CD4-positive, alpha-beta T cell (primary cell): ENCODE measurements at regions of chr3 and their contacts with region 1.

Region 1: DNA sequence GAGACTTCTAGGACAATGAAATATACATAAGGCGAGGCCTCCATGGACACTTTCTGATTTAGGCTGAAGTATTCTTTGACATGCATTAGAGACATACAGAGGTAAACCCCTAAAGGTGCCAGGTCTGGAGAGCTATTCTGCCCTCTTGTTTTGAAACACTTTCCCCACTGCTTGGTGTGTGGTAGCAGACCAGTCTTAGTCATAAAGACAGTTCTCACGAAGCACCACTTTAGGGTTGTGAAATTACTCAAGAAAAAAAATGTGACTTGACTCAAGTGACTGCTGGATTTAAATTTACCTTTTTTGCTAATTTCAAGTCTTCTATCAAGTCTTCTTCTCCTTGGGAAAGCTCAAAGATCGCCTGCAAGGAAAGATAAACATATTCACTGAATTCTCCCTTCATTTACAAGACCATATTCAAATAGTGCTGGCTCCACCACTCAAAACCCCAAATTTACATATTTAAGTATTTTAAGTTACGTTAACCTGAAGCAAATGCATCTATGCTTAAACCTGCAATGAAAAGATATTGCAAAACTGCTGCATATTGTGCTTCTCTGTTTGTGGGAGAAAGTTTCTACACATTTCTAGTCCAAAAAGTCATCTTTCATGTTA is 48.4 kb downstream of the ARHGEF3 start:
- DNase-seq: peak in 6 of 14 experiments; percentile 11 to 53 (median 24)
- ATAC-seq: no peak
- H3K4me3 ChIP-seq: no peak overlapping the region
- H3K4me3 Mint-ChIP-seq: peak overlapping the region; percentile 56
- H3K27ac ChIP-seq: peak overlapping the region; percentile 18 to 31
- H3K27ac Mint-ChIP-seq: peak overlapping the region; percentile 96
- H3K4me1 ChIP-seq: peaks cover 43% of the 10 kb centered on the region
- H3K4me1 Mint-ChIP-seq: peaks cover 69% of the 10 kb centered on the region
- H3K27me3 ChIP-seq: no peaks in the 10 kb centered on the region
- H3K27me3 Mint-ChIP-seq: no peaks in the 10 kb centered on the region
- CTCF ChIP-seq: no peak

Region 2: DNA sequence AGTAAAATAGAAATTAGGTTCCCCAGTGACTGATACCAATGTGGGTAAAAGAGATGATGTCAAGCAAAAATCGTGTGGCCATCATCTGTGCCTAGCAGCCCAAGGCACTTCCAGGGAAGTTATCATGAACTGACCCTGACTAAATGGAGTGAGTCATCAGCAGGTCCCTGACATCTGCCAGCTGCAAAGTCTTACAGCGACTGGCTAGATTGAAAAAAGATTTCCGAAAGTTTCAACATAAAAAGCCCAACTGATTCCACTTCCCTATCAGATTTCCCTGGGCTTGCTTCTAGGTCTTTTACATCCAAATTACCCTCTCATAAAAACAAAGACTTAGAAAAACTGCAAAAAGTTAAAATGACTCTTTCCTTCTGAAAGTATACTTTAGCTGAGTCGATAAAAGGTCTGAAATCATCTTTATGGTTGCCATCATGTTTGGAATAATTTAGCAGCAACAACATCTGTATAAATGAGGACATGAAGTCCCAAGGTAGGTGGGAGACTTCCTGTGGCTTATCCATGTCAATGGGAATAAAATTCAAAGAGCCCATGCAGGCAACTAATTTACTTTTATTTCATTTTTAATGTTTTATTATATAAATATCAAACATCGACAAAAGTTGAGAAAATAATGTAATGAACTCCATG is 627.8 kb before region 1 on chr3:
- CTCF ChIA-PET with region 1: no interaction called
- POLR2A ChIA-PET with region 1: no interaction called
- intact Hi-C with region 1: no loop called
- DNase-seq: peak in 2 of 14 experiments; percentile 3 to 8
- ATAC-seq: no peak
- H3K4me3 ChIP-seq: no peak overlapping the region
- H3K4me3 Mint-ChIP-seq: no peak overlapping the region
- H3K27ac ChIP-seq: no peak overlapping the region
- H3K27ac Mint-ChIP-seq: no peak overlapping the region
- H3K4me1 ChIP-seq: no peaks in the 10 kb centered on the region
- H3K4me1 Mint-ChIP-seq: no peaks in the 10 kb centered on the region
- H3K27me3 ChIP-seq: no peaks in the 10 kb centered on the region
- H3K27me3 Mint-ChIP-seq: no peaks in the 10 kb centered on the region
- CTCF ChIP-seq: no peak

Region 3: DNA sequence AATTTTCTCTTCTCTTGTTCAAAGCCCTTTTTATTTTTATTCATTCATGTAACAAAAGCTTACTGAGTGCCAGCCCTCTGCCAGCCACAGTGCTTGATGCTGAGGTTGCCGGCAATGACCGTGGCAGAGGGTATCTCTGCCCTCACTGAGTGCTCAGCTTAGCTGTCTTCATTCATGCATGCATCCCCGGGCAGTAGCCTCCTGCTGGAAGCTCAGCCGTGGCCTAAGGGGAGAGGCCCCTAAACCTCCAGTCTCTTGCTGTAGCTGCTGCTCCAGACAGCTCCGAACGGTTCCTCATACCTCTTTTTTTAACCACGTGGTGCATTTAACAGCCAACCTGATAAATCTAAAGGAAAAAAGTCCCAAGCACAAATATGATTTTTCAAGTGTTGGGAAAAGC is 230.9 kb before region 1 on chr3:
- CTCF ChIA-PET with region 1: no interaction called
- POLR2A ChIA-PET with region 1: no interaction called
- intact Hi-C with region 1: no loop called
- DNase-seq: no peak
- ATAC-seq: no peak
- H3K4me3 ChIP-seq: no peak overlapping the region
- H3K4me3 Mint-ChIP-seq: no peak overlapping the region
- H3K27ac ChIP-seq: no peak overlapping the region
- H3K27ac Mint-ChIP-seq: no peak overlapping the region
- H3K4me1 ChIP-seq: no peaks in the 10 kb centered on the region
- H3K4me1 Mint-ChIP-seq: no peaks in the 10 kb centered on the region
- H3K27me3 ChIP-seq: peaks cover 0 to 4% of the 10 kb centered on the region in 2 experiments
- H3K27me3 Mint-ChIP-seq: peaks cover 38% of the 10 kb centered on the region
- CTCF ChIP-seq: no peak

Region 4: GRCh38 chr3:56621681-56622080 is 131.6 kb before region 1 on chr3:
- CTCF ChIA-PET with region 1: no interaction called
- POLR2A ChIA-PET with region 1: no interaction called
- intact Hi-C with region 1: no loop called
- DNase-seq: no peak
- ATAC-seq: no peak
- H3K4me3 ChIP-seq: no peak overlapping the region
- H3K4me3 Mint-ChIP-seq: no peak overlapping the region
- H3K27ac ChIP-seq: no peak overlapping the region
- H3K27ac Mint-ChIP-seq: peak overlapping the region; percentile 78
- H3K4me1 ChIP-seq: no peaks in the 10 kb centered on the region
- H3K4me1 Mint-ChIP-seq: peaks cover 16% of the 10 kb centered on the region
- H3K27me3 ChIP-seq: no peaks in the 10 kb centered on the region
- H3K27me3 Mint-ChIP-seq: no peaks in the 10 kb centered on the region
- CTCF ChIP-seq: no peak

Region 5: GRCh38 chr3:56702490-56703315 is 50.6 kb before region 1 on chr3:
- CTCF ChIA-PET with region 1: interaction called, 5 read pairs
- POLR2A ChIA-PET with region 1: no interaction called
- intact Hi-C with region 1: loop called in 1 of 2 experiments (anchors 5 kb)
- DNase-seq: peak in 11 of 14 experiments; percentile 14 to 86 (median 40)
- ATAC-seq: peak; percentile 77
- H3K4me3 ChIP-seq: no peak overlapping the region
- H3K4me3 Mint-ChIP-seq: no peak overlapping the region
- H3K27ac ChIP-seq: no peak overlapping the region
- H3K27ac Mint-ChIP-seq: no peak overlapping the region
- H3K4me1 ChIP-seq: peaks cover 12% of the 10 kb centered on the region
- H3K4me1 Mint-ChIP-seq: peaks cover 29% of the 10 kb centered on the region
- H3K27me3 ChIP-seq: no peaks in the 10 kb centered on the region
- H3K27me3 Mint-ChIP-seq: no peaks in the 10 kb centered on the region
- CTCF ChIP-seq: peak; percentile 84

Region 6: GRCh38 chr3:56725175-56725574 is 28.1 kb before region 1 on chr3:
- CTCF ChIA-PET with region 1: no interaction called
- POLR2A ChIA-PET with region 1: interaction called, 3 read pairs
- intact Hi-C with region 1: loop called in 1 of 2 experiments (anchors 2 kb)
- DNase-seq: peak; percentile 8 to 81 (median 32)
- ATAC-seq: peak; percentile 88
- H3K4me3 ChIP-seq: no peak overlapping the region
- H3K4me3 Mint-ChIP-seq: peak overlapping the region; percentile 55
- H3K27ac ChIP-seq: peak overlapping the region; percentile 22 to 57
- H3K27ac Mint-ChIP-seq: peak overlapping the region; percentile 87
- H3K4me1 ChIP-seq: peaks cover 29% of the 10 kb centered on the region
- H3K4me1 Mint-ChIP-seq: peaks cover 54% of the 10 kb centered on the region
- H3K27me3 ChIP-seq: no peaks in the 10 kb centered on the region
- H3K27me3 Mint-ChIP-seq: no peaks in the 10 kb centered on the region
- CTCF ChIP-seq: no peak

Region 7: GRCh38 chr3:56769116-56769707 is 15.9 kb after region 1 on chr3:
- CTCF ChIA-PET with region 1: interaction called, 4 read pairs
- POLR2A ChIA-PET with region 1: interaction called, 8 read pairs
- intact Hi-C with region 1: loop called in 1 of 2 experiments (anchors 2 kb)
- DNase-seq: no peak
- ATAC-seq: no peak
- H3K4me3 ChIP-seq: no peak overlapping the region
- H3K4me3 Mint-ChIP-seq: no peak overlapping the region
- H3K27ac ChIP-seq: no peak overlapping the region
- H3K27ac Mint-ChIP-seq: peak overlapping the region; percentile 39
- H3K4me1 ChIP-seq: peaks cover 31% of the 10 kb centered on the region
- H3K4me1 Mint-ChIP-seq: peaks cover 76% of the 10 kb centered on the region
- H3K27me3 ChIP-seq: no peaks in the 10 kb centered on the region
- H3K27me3 Mint-ChIP-seq: no peaks in the 10 kb centered on the region
- CTCF ChIP-seq: no peak

Region 8: DNA sequence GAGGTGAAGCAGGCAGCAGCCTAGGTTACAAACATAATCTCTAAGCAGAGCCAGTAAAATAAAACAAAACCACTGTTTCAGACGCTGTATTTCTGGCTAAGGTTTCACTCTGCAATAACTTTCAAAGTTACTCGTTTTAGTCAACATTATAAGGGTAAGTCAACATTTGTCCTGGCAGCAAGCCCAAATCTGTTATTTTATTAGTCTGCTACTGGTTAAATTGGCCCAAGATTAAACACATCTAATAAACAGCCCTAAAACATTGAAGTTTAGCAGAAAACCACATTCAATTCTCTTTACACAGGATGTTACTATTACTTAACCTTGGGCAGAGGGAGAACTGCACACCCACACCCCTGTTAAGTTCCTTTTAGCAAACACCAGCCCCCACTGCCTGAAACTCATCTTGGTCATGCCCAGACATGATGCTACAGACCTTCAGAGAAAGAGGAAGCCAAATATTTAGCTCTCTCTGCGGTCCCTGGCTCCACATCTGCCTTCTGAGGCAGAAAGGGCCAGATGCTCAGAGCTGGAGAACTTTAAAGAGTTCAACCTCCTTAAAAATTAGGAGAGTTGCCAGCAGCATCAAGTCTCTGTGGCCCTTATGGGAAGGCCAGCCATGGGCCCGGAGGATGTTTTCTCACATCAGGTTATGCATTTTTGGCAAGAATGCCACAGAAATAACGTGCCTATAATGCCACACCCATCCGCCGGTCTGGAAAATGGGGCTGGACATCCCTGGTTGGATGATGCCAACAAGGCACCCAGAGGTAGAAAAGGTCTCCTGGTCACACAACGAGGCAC is 30.5 kb after region 1 on chr3:
- CTCF ChIA-PET with region 1: interaction called, 6 read pairs
- POLR2A ChIA-PET with region 1: interaction called, 47 read pairs
- intact Hi-C with region 1: loop called in 1 of 2 experiments (anchors 2 kb)
- DNase-seq: peak; percentile 40 to 92 (median 66)
- ATAC-seq: peak; percentile 83
- H3K4me3 ChIP-seq: peak overlapping the region; percentile 28
- H3K4me3 Mint-ChIP-seq: peak overlapping the region; percentile 60
- H3K27ac ChIP-seq: peak overlapping the region; percentile 82 to 87
- H3K27ac Mint-ChIP-seq: peak overlapping the region; percentile 88
- H3K4me1 ChIP-seq: peaks cover 91% of the 10 kb centered on the region
- H3K4me1 Mint-ChIP-seq: peaks cover 99% of the 10 kb centered on the region
- H3K27me3 ChIP-seq: no peaks in the 10 kb centered on the region
- H3K27me3 Mint-ChIP-seq: no peaks in the 10 kb centered on the region
- CTCF ChIP-seq: no peak